ENCODE measurements at regions of chr15 and their contacts with region 1.

Region 1: DNA sequence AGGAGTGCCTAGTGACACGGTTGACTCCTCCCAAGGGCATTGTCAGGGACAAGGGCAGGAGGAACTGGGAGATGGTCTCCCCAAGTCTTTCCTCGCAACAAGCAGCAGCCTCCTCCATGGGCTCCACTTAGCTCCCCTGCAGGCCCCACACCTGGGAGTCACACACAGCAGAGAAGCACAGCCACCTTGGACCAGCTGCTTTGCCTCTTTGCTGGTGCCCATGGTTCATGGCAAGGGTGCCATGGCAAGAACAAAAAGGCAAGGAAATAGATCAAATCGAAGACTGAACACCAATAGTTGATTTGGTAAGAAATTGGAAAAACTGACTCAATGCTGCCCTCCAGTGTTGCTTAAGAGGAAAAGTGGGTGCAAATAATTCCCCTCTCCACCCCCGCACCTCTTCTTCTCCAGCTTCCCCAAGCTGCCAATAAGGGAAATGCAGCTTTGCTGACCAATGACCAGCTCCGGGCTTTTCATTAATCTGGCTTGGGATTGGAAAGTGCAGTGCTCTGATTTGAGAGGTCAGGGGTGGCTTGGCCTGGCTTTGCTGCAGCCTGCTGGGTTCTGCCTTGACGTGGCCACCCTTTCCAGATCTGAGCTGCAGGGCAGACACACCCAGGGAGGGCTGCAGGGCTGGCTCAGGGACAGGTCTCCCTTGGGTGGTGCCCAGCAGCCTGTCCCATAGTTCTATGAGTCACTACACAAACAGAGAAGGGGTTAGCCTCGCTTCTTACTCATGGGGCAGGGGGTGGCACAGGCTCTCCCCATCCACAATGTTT is 162.0 kb downstream of the KLF13 start:
- DNase-seq: peak; percentile 57
- ATAC-seq: peak; percentile 51
- H3K4me3 Mint-ChIP-seq: no peak overlapping the region
- H3K27ac Mint-ChIP-seq: peak overlapping the region; percentile 77
- H3K4me1 Mint-ChIP-seq: peaks cover 68% of the 10 kb centered on the region
- H3K27me3 Mint-ChIP-seq: no peaks in the 10 kb centered on the region
- CTCF ChIP-seq: peak; percentile 92

Region 2: DNA sequence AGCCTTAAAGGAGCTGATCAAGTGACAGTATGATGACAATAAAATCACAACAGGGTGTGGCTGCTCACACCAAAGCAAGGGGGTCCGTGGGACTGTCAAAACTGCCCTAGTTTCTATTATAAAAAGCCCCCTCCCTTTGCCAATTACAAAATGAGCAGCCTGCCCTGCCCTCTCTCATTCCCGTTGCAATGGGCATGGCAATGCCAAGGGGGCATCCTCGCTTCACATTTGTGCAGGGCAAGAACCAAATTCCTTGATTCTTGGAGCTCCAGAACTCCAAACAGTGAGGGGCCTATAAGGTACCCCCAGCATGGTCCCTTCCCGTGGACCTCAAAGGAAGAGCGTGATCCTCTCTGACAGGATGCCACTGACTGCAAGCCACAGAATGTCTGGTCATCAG is 282.2 kb before region 1 on chr15:
- CTCF ChIA-PET with region 1: interaction called, 40 read pairs
- POLR2A ChIA-PET with region 1: no interaction called
- intact Hi-C with region 1: loop called (anchors 5 kb)
- DNase-seq: no peak
- ATAC-seq: no peak
- H3K4me3 Mint-ChIP-seq: no peak overlapping the region
- H3K27ac Mint-ChIP-seq: no peak overlapping the region
- H3K4me1 Mint-ChIP-seq: peaks cover 30% of the 10 kb centered on the region
- H3K27me3 Mint-ChIP-seq: no peaks in the 10 kb centered on the region
- CTCF ChIP-seq: no peak

Region 3: GRCh38 chr15:31344823-31345605 is 143.6 kb before region 1 on chr15:
- CTCF ChIA-PET with region 1: interaction called, 18 read pairs
- POLR2A ChIA-PET with region 1: interaction called, 30 read pairs
- intact Hi-C with region 1: loop called (anchors 5 kb)
- DNase-seq: peak; percentile 75
- ATAC-seq: peak; percentile 40
- H3K4me3 Mint-ChIP-seq: peak overlapping the region; percentile 90
- H3K27ac Mint-ChIP-seq: peak overlapping the region; percentile 99
- H3K4me1 Mint-ChIP-seq: peaks cover 84% of the 10 kb centered on the region
- H3K27me3 Mint-ChIP-seq: no peaks in the 10 kb centered on the region
- CTCF ChIP-seq: no peak

Region 4: GRCh38 chr15:31379042-31379441 is 109.6 kb before region 1 on chr15:
- CTCF ChIA-PET with region 1: interaction called, 14 read pairs
- POLR2A ChIA-PET with region 1: no interaction called
- intact Hi-C with region 1: no loop called
- DNase-seq: peak; percentile 61
- ATAC-seq: peak; percentile 58
- H3K4me3 Mint-ChIP-seq: no peak overlapping the region
- H3K27ac Mint-ChIP-seq: peak overlapping the region; percentile 82
- H3K4me1 Mint-ChIP-seq: peaks cover 60% of the 10 kb centered on the region
- H3K27me3 Mint-ChIP-seq: no peaks in the 10 kb centered on the region
- CTCF ChIP-seq: no peak

Region 5: GRCh38 chr15:31435261-31435911 is 53.2 kb before region 1 on chr15:
- CTCF ChIA-PET with region 1: interaction called, 265 read pairs
- POLR2A ChIA-PET with region 1: interaction called, 96 read pairs
- intact Hi-C with region 1: loop called (anchors 2 kb)
- DNase-seq: peak; percentile 95
- ATAC-seq: peak; percentile 71
- H3K4me3 Mint-ChIP-seq: peak overlapping the region; percentile 72
- H3K27ac Mint-ChIP-seq: peak overlapping the region; percentile 98
- H3K4me1 Mint-ChIP-seq: peaks cover 72% of the 10 kb centered on the region
- H3K27me3 Mint-ChIP-seq: no peaks in the 10 kb centered on the region
- CTCF ChIP-seq: peak; percentile 63

Region 6: GRCh38 chr15:31458591-31459399 is 29.8 kb before region 1 on chr15:
- CTCF ChIA-PET with region 1: interaction called, 31 read pairs
- POLR2A ChIA-PET with region 1: interaction called, 6 read pairs
- intact Hi-C with region 1: no loop called
- DNase-seq: peak; percentile 80
- ATAC-seq: peak; percentile 98
- H3K4me3 Mint-ChIP-seq: peak overlapping the region; percentile 12
- H3K27ac Mint-ChIP-seq: peak overlapping the region; percentile 81
- H3K4me1 Mint-ChIP-seq: peaks cover 28% of the 10 kb centered on the region
- H3K27me3 Mint-ChIP-seq: no peaks in the 10 kb centered on the region
- CTCF ChIP-seq: no peak

Region 7: GRCh38 chr15:31508656-31509055 is 20.0 kb after region 1 on chr15:
- CTCF ChIA-PET with region 1: interaction called, 12 read pairs
- POLR2A ChIA-PET with region 1: no interaction called
- intact Hi-C with region 1: no loop called
- DNase-seq: no peak
- ATAC-seq: no peak
- H3K4me3 Mint-ChIP-seq: no peak overlapping the region
- H3K27ac Mint-ChIP-seq: no peak overlapping the region
- H3K4me1 Mint-ChIP-seq: peaks cover 20% of the 10 kb centered on the region
- H3K27me3 Mint-ChIP-seq: peaks cover 12% of the 10 kb centered on the region
- CTCF ChIP-seq: no peak

Measured in activated CD8-positive, alpha-beta T cell treated with anti-CD3 and anti-CD28 coated beads for 36 hours (primary cell).